Calu3 (cell line): ENCODE measurements at regions of chr17 and their contacts with region 1.

Region 1: DNA sequence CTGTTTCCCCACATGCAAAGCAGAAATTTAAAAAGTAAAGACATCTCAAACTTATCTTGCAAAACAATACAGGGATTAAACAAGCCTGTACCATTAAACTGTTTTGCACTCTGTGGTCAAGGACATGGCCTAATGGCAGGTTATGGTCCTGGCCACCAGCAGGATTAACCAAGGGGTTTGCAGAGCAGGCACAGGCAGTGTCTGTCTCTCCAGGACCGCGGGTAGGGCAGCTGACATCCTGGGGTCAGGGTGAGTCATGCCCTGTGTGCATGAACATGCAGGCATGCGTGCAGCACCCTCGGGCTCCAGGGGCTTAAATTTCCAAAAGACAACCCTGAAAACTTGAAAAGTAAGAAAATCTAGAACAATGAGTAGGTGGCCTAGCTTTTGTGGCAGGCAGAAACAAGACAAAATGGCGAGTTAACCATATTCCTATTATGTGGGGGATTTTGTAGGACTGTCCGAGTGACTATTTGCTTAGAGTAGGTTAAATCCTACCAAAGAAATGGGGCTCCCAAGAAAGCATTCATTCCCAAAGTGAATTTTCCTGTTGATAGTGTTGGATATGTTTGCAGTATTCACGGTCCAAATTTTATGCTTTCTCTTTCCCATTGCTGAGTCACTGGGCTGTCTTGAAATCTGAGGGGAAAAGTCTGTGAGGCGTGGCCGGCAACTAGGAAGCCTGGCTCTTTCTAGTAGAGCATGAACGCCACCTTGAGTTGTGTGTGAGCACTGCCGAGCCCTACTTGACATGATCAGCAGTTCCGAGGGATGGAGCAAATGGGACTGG is 158.4 kb upstream of the FAM20A start:
- DNase-seq: peak; percentile 83
- H3K4me3 Mint-ChIP-seq: peak overlapping the region; percentile 74
- H3K27ac Mint-ChIP-seq: peak overlapping the region; percentile 90
- H3K4me1 Mint-ChIP-seq: peaks cover 25% of the 10 kb centered on the region
- H3K27me3 Mint-ChIP-seq: no peaks in the 10 kb centered on the region
- CTCF ChIP-seq: peak; percentile 72

Region 2: GRCh38 chr17:68172461-68172954 is 587.0 kb before region 1 on chr17:
- CTCF ChIA-PET with region 1: no interaction called
- intact Hi-C with region 1: loop called (anchors 5 kb)
- DNase-seq: peak; percentile 72
- H3K4me3 Mint-ChIP-seq: no peak overlapping the region
- H3K27ac Mint-ChIP-seq: no peak overlapping the region
- H3K4me1 Mint-ChIP-seq: no peaks in the 10 kb centered on the region
- H3K27me3 Mint-ChIP-seq: no peaks in the 10 kb centered on the region
- CTCF ChIP-seq: peak; percentile 86

Region 3: DNA sequence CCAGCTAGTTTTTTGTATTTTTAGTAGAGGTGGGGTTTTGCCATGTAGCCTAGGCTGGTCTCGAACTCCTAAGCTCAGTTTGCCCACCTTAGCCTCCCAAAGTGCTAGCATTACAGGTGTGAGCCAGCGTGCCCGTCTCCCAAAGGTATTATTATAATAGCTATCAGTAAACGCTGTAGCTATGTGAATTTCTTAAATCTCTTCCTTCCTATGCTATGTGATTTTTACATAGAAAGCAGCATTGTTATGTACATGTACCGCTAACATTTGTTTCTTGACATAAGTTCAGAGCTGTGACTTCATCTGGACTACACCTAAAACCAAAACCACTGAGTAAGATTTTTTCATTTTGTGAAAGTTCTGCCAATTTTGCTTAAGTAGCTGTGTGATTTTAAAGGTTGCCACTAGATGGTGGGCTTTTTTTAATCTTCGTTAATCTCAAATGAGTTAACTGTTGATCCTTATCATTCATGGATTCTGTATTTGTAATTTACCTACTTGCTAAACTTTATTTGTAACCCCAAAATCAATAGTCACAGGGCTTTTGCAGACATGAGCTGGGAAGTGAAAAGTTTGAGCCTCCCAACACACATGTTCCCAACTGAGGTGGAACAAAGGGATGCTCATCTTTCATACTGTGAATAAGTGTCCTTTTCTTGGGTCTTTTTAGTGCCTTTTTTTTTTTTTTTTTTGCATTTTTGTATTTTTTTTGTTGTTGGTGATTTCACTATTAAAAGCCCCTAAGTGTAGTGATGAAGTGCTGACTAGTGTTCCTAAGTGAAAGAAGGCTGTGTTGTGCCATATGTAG is 225.4 kb before region 1 on chr17:
- CTCF ChIA-PET with region 1: no interaction called
- intact Hi-C with region 1: loop called (anchors 5 kb)
- DNase-seq: no peak
- H3K4me3 Mint-ChIP-seq: no peak overlapping the region
- H3K27ac Mint-ChIP-seq: no peak overlapping the region
- H3K4me1 Mint-ChIP-seq: no peaks in the 10 kb centered on the region
- H3K27me3 Mint-ChIP-seq: no peaks in the 10 kb centered on the region
- CTCF ChIP-seq: no peak

Region 4: DNA sequence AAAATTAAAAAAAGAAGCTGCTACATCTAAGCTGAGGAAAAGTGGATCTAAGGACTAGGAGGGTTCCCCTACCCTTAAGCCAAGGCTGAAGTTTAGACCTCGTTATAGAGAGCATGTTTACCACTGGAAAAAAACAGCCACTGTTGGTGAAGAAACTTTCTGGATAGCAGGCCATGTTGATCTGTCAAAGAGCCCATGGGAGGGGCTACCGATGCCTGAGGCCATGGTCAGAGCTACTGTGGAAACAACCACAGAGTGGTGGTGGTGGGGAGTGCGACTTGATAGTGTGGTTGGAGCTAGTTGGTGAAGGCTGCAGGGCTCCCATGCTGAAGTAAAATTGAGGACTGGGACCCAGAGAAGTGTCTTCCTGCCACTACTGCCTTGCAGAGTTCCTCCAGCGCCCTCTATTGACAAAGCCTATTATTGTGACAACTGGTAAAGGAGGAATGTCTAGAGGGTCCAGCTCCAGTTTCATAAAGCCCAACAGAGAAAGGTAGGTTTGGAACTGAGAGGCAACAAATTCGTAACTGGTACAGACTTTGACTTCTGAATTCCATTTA is 145.7 kb before region 1 on chr17:
- CTCF ChIA-PET with region 1: no interaction called
- intact Hi-C with region 1: loop called (anchors 5 kb)
- DNase-seq: peak; percentile 54
- H3K4me3 Mint-ChIP-seq: no peak overlapping the region
- H3K27ac Mint-ChIP-seq: no peak overlapping the region
- H3K4me1 Mint-ChIP-seq: no peaks in the 10 kb centered on the region
- H3K27me3 Mint-ChIP-seq: peaks cover 11% of the 10 kb centered on the region
- CTCF ChIP-seq: peak; percentile 50

Region 5: DNA sequence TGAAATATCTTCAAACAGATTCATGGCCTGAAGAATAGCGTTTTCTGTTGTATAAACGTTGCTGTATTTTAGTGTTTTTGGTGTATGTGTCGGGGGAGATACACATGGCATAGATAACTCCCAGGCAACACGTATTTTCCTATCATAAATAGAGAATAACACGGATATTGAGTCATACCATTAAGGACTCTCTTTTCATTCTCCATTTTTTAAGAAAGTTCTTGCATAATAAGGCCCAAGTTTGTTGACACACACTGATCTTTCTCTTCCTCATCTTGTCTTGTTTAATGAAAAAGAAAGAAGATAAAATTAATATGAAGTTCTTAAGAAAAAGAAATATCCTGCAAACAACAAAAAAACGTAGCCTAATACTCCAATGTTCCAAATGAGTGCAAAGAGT is 182.2 kb after region 1 on chr17:
- CTCF ChIA-PET with region 1: no interaction called
- intact Hi-C with region 1: no loop called
- DNase-seq: no peak
- H3K4me3 Mint-ChIP-seq: no peak overlapping the region
- H3K27ac Mint-ChIP-seq: no peak overlapping the region
- H3K4me1 Mint-ChIP-seq: no peaks in the 10 kb centered on the region
- H3K27me3 Mint-ChIP-seq: no peaks in the 10 kb centered on the region
- CTCF ChIP-seq: no peak

Region 6: GRCh38 chr17:69030145-69030544 is 270.6 kb after region 1 on chr17:
- CTCF ChIA-PET with region 1: no interaction called
- intact Hi-C with region 1: no loop called
- DNase-seq: no peak
- H3K4me3 Mint-ChIP-seq: no peak overlapping the region
- H3K27ac Mint-ChIP-seq: no peak overlapping the region
- H3K4me1 Mint-ChIP-seq: no peaks in the 10 kb centered on the region
- H3K27me3 Mint-ChIP-seq: no peaks in the 10 kb centered on the region
- CTCF ChIP-seq: no peak

Region 7: GRCh38 chr17:70190959-70191805 is 1431.6 kb after region 1 on chr17:
- CTCF ChIA-PET with region 1: interaction called, 11 read pairs
- intact Hi-C with region 1: no loop called
- DNase-seq: no peak
- H3K4me3 Mint-ChIP-seq: no peak overlapping the region
- H3K27ac Mint-ChIP-seq: no peak overlapping the region
- H3K4me1 Mint-ChIP-seq: no peaks in the 10 kb centered on the region
- H3K27me3 Mint-ChIP-seq: no peaks in the 10 kb centered on the region
- CTCF ChIP-seq: no peak